Dorsolateral prefrontal cortex (tissue), 120 donors: ENCODE measurements at regions of chr3 and their contacts with region 1.

Region 1: DNA sequence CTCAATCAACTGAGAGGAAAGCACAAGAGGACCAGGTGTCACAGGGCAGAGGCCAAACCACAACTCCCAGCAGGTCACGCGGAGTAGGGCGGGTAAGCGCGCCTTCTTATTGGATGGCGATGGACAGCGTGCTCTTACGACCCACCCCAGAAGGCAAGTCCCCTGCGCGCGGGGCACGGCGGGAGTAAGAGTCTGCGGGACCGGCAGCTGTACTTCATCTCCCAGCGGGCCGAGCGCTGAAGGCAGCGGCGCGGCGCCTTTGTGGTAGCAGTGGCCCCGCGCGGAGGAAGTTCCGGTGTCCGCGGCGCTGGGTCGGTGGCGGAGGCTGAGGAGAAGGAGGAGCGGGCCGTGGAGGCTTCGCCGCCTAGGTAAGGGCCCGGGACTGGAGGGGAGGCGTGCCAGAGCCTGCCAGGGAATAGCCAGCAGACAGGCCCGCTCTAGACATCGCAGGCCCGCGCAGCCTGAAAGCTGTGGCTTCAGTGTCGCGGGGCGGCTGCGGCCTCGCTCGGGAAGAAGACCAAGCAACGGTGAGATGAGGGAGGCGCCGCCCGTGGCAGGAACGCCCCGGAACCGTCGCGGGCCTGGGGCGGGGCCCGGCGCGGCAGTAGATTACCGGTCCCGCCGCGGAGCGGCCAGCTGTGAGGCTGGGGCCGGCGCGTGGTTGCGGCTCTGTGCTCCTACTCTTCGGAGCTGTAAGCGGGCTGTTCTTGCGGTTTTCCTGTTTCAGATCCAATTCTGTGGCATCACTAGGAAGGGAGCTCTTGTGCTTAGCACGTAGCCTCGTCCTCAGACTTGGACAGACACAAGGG is at the start of gene RBM6:
- DNase-seq: peak; percentile 98 to 100 (median 99)
- H3K4me3 ChIP-seq: peak within 1 kb of the TSS; percentile 59 to 100 (median 91)
- H3K27ac ChIP-seq: peak within 1 kb of the TSS; percentile 19 to 97 (median 90)
- H3K27me3 ChIP-seq: no peaks in the 10 kb centered on the region
- CTCF ChIP-seq: peak in 46 of 56 donors; percentile 8 to 63 (median 37)
- total RNA-seq, gene RBM6: 77.2 to 210 (median 125) TPM

Region 2: GRCh38 chr3:49786241-49786958 is 153.7 kb before region 1 on chr3 and contains the start of gene IP6K1:
- intact Hi-C with region 1: loop called in 1 of 2 experiments (anchors 2 kb)
- DNase-seq: peak; percentile 100
- H3K4me3 ChIP-seq: peak within 1 kb of the TSS; percentile 69 to 100 (median 96)
- H3K27ac ChIP-seq: peak within 1 kb of the TSS; percentile 61 to 99 (median 95)
- H3K27me3 ChIP-seq: no peaks in the 10 kb centered on the region
- CTCF ChIP-seq: peak in 25 of 56 donors; percentile 8 to 56 (median 23)
- total RNA-seq, gene IP6K1: 82.9 to 160 (median 118) TPM

Region 3: DNA sequence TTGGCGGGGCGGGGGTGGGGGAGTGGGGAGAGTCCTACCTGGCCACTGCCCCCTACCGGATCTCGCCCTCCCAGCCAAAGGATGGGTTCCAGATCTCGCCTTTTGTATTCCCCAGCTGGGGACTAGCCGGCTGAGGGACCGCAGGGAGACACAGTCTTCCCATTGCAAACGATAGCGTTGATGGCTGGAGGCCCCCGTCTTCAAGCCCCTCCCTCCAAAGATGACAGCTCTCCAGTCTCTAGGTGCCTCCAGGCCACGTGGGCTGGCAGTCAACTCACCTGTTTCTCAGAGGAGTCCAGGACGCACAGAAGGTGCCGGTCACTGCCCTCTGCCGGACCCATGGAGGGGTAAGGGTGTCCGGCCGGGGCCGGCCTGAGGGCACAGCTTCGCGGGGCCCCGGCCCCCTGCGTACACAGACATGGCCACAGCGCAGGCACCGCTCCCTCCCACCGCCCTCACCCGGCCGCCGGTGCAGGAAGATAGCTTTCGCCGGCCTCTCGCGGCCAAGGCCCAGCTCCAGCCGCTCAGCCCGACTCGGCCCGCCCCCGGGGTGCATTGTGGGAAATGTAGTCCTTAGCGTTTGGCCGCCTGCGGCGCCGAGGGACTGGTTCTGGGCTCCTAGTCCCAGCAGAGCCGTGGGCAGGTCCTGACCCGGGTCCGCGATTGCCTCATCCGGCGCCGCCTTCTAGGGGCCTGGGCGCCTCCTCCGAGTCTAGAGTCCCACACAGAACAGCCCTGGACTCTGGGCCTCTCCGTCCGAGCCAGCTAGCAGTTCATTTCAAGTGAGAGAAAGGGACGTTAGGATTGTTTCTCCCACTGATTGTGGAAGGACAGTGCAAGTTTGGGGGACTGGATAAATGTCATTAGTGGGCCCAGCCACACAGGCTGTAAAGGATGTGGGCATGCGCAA is 10.5 kb before region 1 on chr3 and contains the start of gene MON1A:
- intact Hi-C with region 1: loop called in 1 of 2 experiments (anchors 1 kb)
- DNase-seq: peak; percentile 87 to 98 (median 94)
- H3K4me3 ChIP-seq: peak within 1 kb of the TSS; percentile 63 to 98 (median 91)
- H3K27ac ChIP-seq: peak within 1 kb of the TSS; percentile 2 to 97 (median 89)
- H3K27me3 ChIP-seq: no peaks in the 10 kb centered on the region
- CTCF ChIP-seq: peak in 49 of 56 donors; percentile 11 to 67 (median 42)
- total RNA-seq, gene MON1A: 14.1 to 38.3 (median 21.6) TPM

Region 4: DNA sequence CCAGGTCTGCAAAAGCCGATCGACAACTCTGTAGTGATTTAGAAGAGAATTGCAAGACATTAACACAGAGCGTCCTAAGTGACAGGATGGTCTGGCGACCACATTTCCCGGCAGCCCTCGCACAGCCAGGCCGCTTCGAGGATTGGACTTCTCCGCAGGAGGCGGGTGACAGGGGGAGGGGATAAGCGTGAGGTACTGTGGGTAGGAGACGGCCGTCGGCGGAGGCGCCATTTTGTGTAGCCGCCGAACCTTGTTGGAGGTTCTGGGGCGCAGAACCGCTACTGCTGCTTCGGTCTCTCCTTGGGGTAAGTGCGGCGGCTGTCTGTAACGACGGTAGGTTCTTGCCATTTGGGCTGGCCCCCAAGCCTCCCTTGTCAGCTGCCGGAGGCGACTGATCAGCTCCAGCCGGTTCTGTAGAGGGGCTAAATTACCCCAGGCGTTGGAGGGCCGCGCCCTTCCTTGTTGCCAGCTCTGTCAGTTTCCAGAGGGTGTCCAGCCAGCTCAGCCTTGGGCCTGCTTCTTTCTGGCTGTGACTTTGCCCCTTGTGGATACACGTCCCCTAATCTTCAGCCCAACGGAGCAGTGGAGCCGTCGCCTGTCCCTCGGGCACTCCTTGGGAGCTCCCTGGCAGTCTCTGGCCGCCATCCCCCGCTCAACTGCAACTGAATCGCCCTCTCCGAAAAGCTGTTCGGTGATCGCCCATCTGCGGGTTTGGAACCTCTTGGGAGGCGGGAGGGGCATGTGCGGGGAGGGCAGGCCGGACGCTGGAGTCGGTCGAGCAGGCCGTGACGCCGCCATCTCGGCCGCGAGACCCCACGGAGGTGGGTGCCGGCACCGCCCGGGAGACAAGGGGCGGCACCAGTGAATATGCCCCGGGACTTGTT is 148.9 kb after region 1 on chr3 and contains the start of gene RBM5:
- intact Hi-C with region 1: loop called (anchors 5 kb)
- DNase-seq: peak; percentile 88 to 96 (median 94)
- H3K4me3 ChIP-seq: peak within 1 kb of the TSS; percentile 67 to 100 (median 96)
- H3K27ac ChIP-seq: peak within 1 kb of the TSS; percentile 84 to 99 (median 96)
- H3K27me3 ChIP-seq: no peaks in the 10 kb centered on the region
- CTCF ChIP-seq: peak in 41 of 56 donors; percentile 10 to 57 (median 32)
- total RNA-seq, gene RBM5: 146 to 322 (median 227) TPM